ENCODE measurements at regions of chr4 and their contacts with region 1.

Region 1: GRCh38 chr4:76035141-76035540 is 729 bp downstream of the CXCL11 start:
- DNase-seq: no peak
- ATAC-seq: no peak
- H3K4me3 Mint-ChIP-seq: no peak overlapping the region
- H3K27ac Mint-ChIP-seq: no peak overlapping the region
- H3K4me1 Mint-ChIP-seq: peaks cover 4% of the 10 kb centered on the region
- H3K27me3 Mint-ChIP-seq: peaks cover 4% of the 10 kb centered on the region
- CTCF ChIP-seq: no peak

Region 2: GRCh38 chr4:76024065-76024464 is 11.1 kb before region 1 on chr4:
- CTCF ChIA-PET with region 1: interaction called, 15 read pairs
- POLR2A ChIA-PET with region 1: no interaction called
- intact Hi-C with region 1: no loop called
- DNase-seq: no peak
- ATAC-seq: peak; percentile 45
- H3K4me3 Mint-ChIP-seq: no peak overlapping the region
- H3K27ac Mint-ChIP-seq: no peak overlapping the region
- H3K4me1 Mint-ChIP-seq: peaks cover 23% of the 10 kb centered on the region
- H3K27me3 Mint-ChIP-seq: peaks cover 15% of the 10 kb centered on the region
- CTCF ChIP-seq: no peak

Region 3: GRCh38 chr4:76156635-76157034 is 121.5 kb after region 1 on chr4:
- CTCF ChIA-PET with region 1: no interaction called
- POLR2A ChIA-PET with region 1: no interaction called
- intact Hi-C with region 1: no loop called
- DNase-seq: no peak
- ATAC-seq: no peak
- H3K4me3 Mint-ChIP-seq: no peak overlapping the region
- H3K27ac Mint-ChIP-seq: no peak overlapping the region
- H3K4me1 Mint-ChIP-seq: no peaks in the 10 kb centered on the region
- H3K27me3 Mint-ChIP-seq: no peaks in the 10 kb centered on the region
- CTCF ChIP-seq: no peak

Measured in activated CD8-positive, alpha-beta T cell treated with anti-CD3 and anti-CD28 coated beads for 36 hours (primary cell).